SK-N-SH (cell line): ENCODE measurements at regions of chr5 and their contacts with region 1.

Region 1: GRCh38 chr5:133714161-133714915 is 102.0 kb upstream of the FSTL4 start:
- DNase-seq: peak; percentile 74
- H3K4me3 ChIP-seq: no peak overlapping the region
- H3K27ac ChIP-seq: peak overlapping the region in 1 of 2 experiments; percentile 96; a peak in 2 of 4 replicates
- H3K4me1 ChIP-seq: peaks cover 0 to 45% of the 10 kb centered on the region in 2 experiments; a peak in 2 of 4 replicates
- H3K27me3 ChIP-seq: no peaks in the 10 kb centered on the region
- CTCF ChIP-seq: no peak
- EP300 ChIP-seq: peak in 1 of 2 experiments; percentile 96; a peak in 2 of 4 replicates
- RAD21 ChIP-seq: peak; percentile 43

Region 2: DNA sequence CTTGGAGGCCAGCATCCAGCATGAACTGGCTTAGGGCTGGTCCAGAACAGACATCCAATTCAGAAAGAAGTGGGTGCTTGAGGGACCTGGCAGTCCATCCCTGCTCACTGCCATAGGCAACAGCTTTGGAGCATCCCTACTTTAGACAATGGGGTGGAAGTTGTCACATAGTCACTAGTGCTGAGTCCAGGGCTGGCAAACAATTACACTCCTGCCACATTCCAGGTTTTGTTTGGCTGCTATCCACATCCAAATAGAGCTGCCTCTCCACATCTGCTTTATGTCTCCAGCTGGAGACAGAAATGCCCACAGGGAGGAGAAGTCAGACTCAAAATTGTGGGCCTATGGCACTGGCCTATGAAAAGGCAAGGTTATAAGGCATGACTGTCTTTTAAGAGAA is 109.0 kb before region 1 on chr5:
- CTCF ChIA-PET with region 1: interaction called, 11 read pairs
- POLR2A ChIA-PET with region 1: no interaction called
- DNase-seq: peak; percentile 80
- H3K4me3 ChIP-seq: no peak overlapping the region
- H3K27ac ChIP-seq: peak overlapping the region in 1 of 2 experiments; percentile 68; a peak in 2 of 4 replicates
- H3K4me1 ChIP-seq: peaks cover 0 to 22% of the 10 kb centered on the region in 2 experiments; a peak in 2 of 4 replicates
- H3K27me3 ChIP-seq: peaks cover 4% of the 10 kb centered on the region; the same call in 1 of the 2 replicates
- CTCF ChIP-seq: no peak
- EP300 ChIP-seq: peak in 1 of 2 experiments; percentile 86; a peak in 2 of 4 replicates
- RAD21 ChIP-seq: no peak